Right lobe of liver (tissue), 6 donors: ENCODE measurements at regions of chr15 and their contacts with region 1.

Region 1: DNA sequence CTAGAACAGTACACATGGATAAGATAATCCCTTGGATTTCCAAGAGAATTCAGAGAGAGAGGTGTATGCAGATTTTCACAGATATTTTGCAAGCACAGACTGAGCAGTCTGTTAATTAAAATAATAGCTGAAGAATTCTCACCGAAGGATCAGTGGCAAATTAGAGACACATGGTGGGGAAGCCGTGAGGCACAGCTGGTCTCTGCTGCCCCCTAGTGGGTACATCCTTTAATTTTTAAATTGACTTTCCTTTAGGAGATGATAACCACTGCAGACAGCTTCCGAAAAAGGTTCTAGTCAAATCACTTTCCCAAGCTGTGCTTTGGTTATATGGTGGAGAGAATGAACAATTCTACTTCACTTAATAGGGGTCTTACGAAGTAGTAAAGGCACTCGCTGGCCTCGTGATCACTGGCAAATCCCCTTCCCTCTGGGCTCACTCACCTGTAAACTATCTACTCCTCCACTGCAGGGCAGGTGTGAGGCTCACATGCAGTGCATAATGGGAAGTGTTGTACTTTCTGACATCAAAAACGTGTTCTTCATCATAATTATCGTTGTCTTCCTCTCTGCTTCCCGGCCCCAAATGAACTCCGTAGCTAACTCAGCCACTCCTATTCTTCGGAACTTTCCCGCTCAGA is 19.5 kb downstream of the MESD start:
- DNase-seq: no peak
- ATAC-seq: peak; percentile 75 to 89 (median 82)
- H3K4me3 ChIP-seq: no peak overlapping the region
- H3K27ac ChIP-seq: no peak overlapping the region
- H3K4me1 ChIP-seq: no peaks in the 10 kb centered on the region
- H3K27me3 ChIP-seq: no peaks in the 10 kb centered on the region
- CTCF ChIP-seq: peak; percentile 71 to 86 (median 84)
- POLR2A ChIP-seq: no peak

Region 2: GRCh38 chr15:80455668-80456442 is 514.3 kb before region 1 on chr15:
- intact Hi-C with region 1: loop called (anchors 10 kb)
- DNase-seq: peak in 2 of 3 donors; percentile 42 to 63
- ATAC-seq: peak; percentile 84 to 90 (median 88)
- H3K4me3 ChIP-seq: no peak overlapping the region
- H3K27ac ChIP-seq: no peak overlapping the region
- H3K4me1 ChIP-seq: peaks cover 0 to 4% (median 0%) of the 10 kb centered on the region in 4 donors
- H3K27me3 ChIP-seq: no peaks in the 10 kb centered on the region
- CTCF ChIP-seq: peak; percentile 83 to 94 (median 91)
- POLR2A ChIP-seq: no peak

Region 3: DNA sequence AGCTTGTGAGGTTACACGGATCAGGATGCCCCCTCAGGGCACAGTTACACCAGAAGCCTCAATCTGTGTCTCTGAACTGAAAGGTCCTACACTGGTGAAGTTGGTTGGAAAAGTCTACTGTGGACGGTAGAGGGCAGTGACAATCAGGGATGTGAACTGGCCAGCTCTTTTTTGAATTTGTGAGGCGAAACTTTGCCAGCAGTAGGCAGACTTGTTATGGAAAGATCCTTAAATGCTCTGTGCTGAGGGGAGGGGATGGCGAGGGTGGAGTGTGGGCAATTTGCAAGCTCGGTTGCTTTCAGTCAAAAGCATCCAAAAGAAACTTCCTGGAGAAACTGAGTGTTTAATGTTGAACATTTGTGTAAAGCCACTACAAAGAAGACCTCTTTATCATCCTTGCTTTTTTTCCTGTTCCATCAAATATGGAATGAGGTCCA is 402.4 kb before region 1 on chr15:
- intact Hi-C with region 1: loop called in 1 of 2 experiments (anchors 10 kb)
- DNase-seq: peak in 1 of 3 donors; percentile 64
- ATAC-seq: peak; percentile 90 to 97 (median 93)
- H3K4me3 ChIP-seq: no peak overlapping the region
- H3K27ac ChIP-seq: no peak overlapping the region
- H3K4me1 ChIP-seq: no peaks in the 10 kb centered on the region
- H3K27me3 ChIP-seq: no peaks in the 10 kb centered on the region
- CTCF ChIP-seq: peak; percentile 73 to 83 (median 79)
- POLR2A ChIP-seq: no peak

Region 4: DNA sequence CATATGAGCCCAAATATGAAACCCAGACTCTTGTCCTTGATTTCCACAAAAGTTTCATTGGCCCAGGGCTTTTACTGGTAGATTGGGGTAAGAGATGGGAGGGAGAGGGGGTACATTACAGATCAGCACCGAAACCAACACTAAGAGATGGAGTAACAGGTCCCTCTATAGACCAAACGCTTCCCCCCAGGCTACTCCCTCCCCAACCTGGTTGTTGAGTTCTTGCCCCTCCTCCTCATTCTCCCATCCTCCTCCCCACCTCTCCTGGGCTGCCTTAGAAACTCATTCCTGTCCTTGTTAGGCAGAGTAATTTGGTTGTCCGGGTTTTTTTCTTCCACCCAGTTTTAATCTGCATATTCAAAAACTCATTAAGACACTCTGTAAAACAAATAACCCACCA is 54.7 kb before region 1 on chr15:
- intact Hi-C with region 1: no loop called
- DNase-seq: no peak
- ATAC-seq: no peak
- H3K4me3 ChIP-seq: no peak overlapping the region
- H3K27ac ChIP-seq: no peak overlapping the region
- H3K4me1 ChIP-seq: no peaks in the 10 kb centered on the region
- H3K27me3 ChIP-seq: no peaks in the 10 kb centered on the region
- CTCF ChIP-seq: no peak
- POLR2A ChIP-seq: no peak